PC-3 (cell line): ENCODE measurements at regions of chr3 and their contacts with region 1.

Region 1: GRCh38 chr3:47802734-47803477 is at the start of gene DHX30:
- DNase-seq: peak; percentile 83
- ATAC-seq: peak; percentile 90
- H3K4me3 ChIP-seq: peak within 1 kb of the TSS; percentile 96
- H3K27ac ChIP-seq: peak within 1 kb of the TSS; percentile 84
- H3K4me1 ChIP-seq: peaks cover 17% of the 10 kb centered on the region; the same call in 1 of the 2 replicates
- H3K27me3 ChIP-seq: no peaks in the 10 kb centered on the region
- CTCF ChIP-seq: no peak
- total RNA-seq, gene DHX30: 152 and 153 TPM in 2 replicates

Region 2: DNA sequence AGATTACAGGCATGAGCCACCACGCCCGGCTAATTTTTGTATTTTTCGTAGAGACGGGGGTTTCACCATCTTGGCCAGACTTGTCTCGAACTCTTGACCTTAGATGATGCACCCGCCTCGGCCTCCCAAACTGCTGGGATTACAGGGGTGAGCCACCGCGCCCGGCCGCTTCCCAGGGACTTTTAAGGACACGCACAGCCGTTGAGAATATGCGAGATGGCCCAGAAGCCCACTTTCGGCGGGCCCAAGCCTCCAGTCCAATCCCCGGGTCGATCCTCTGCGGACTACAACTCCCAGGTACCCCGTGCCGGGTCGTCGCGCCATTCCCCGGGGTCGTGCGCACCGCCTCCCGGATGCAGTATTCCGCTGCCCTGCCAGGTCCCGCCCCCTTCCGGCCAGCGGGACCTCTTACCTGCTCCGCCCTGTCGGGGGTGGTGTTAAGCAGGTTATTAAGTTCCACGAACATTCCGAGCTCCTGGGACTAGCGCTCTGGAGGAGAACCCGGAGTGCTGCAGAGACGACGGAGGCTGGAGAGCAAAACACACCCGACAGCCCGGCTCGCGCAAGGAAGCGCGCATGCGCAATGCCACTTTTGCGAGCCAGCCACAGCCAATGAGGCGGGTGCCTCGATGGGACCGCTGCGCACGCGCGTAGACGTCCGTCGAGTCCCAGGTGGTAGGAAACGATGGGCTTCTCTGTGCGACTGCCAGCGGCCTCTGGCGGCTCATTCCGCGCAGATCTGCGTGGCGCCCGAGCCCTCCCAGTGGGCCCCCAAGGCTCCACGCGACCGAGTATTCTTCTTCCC is 289.6 kb before region 1 on chr3 and contains the start of gene ELP6:
- CTCF ChIA-PET with region 1: no interaction called
- POLR2A ChIA-PET with region 1: no interaction called
- intact Hi-C with region 1: loop called (anchors 5 kb)
- DNase-seq: peak; percentile 96
- ATAC-seq: peak; percentile 98
- H3K4me3 ChIP-seq: peak within 1 kb of the TSS; percentile 80
- H3K27ac ChIP-seq: peak within 1 kb of the TSS; percentile 88
- H3K4me1 ChIP-seq: peaks cover 11% of the 10 kb centered on the region
- H3K27me3 ChIP-seq: no peaks in the 10 kb centered on the region
- CTCF ChIP-seq: peak; percentile 58
- total RNA-seq, gene ELP6: 64.5 and 97.9 TPM in 2 replicates

Region 3: DNA sequence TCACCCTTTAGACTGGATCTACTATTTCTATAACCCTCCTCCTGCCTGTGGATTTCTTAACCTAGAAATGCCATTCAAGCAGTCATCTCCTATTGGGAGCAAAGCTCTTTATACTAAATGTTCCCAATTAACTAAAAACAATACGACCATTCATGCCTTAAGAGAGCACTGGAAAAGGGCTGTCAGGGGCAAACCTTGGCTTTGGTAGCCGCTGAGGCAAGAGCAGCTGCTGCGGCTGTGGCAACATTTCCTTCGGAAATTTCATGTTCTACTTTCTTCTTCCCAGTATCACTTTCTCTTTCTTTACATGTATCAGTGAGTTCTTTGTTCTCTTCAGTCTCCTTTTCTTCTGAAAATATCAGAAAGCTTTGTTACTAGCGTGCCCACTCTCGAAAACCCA is 167.9 kb before region 1 on chr3:
- CTCF ChIA-PET with region 1: no interaction called
- POLR2A ChIA-PET with region 1: no interaction called
- intact Hi-C with region 1: no loop called
- DNase-seq: no peak
- ATAC-seq: no peak
- H3K4me3 ChIP-seq: no peak overlapping the region
- H3K27ac ChIP-seq: no peak overlapping the region
- H3K4me1 ChIP-seq: no peaks in the 10 kb centered on the region
- H3K27me3 ChIP-seq: no peaks in the 10 kb centered on the region
- CTCF ChIP-seq: no peak

Region 4: DNA sequence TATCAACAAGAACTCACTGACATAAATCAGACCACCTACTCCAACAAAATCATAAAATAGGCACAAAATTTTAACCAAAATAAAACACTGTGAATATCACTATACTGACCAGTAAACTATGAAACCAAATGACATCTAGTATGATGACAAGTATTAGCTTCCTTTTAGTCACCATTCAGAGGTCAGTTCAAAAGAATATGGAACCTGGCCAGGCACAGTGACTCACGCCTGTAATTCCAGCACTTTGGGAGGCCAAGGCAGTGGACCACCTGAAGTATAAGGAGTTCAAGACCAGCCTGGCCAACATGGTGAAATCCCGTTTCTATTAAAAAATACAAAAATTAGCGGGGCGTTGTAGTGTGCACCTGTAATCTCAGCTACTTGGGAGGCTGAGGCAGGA is 87.0 kb before region 1 on chr3:
- CTCF ChIA-PET with region 1: no interaction called
- POLR2A ChIA-PET with region 1: no interaction called
- intact Hi-C with region 1: no loop called
- DNase-seq: peak; percentile 88
- ATAC-seq: peak; percentile 93
- H3K4me3 ChIP-seq: no peak overlapping the region
- H3K27ac ChIP-seq: no peak overlapping the region
- H3K4me1 ChIP-seq: peaks cover 5% of the 10 kb centered on the region
- H3K27me3 ChIP-seq: no peaks in the 10 kb centered on the region
- CTCF ChIP-seq: no peak